ENCODE measurements at regions of chr1 and their contacts with region 1.

Region 1: GRCh38 chr1:154943649-154944400 is 7.3 kb upstream of the PMVK start:
- DNase-seq: peak; percentile 61
- H3K4me3 Mint-ChIP-seq: peak overlapping the region; percentile 52
- H3K27ac Mint-ChIP-seq: peak overlapping the region; percentile 93
- H3K4me1 Mint-ChIP-seq: peaks cover 54% of the 10 kb centered on the region
- H3K27me3 Mint-ChIP-seq: no peaks in the 10 kb centered on the region

Region 2: GRCh38 chr1:154961497-154962262 is 17.9 kb after region 1 on chr1 and contains the start of gene PYGO2:
- CTCF ChIA-PET with region 1: interaction called, 14 read pairs
- POLR2A ChIA-PET with region 1: interaction called, 3 read pairs
- intact Hi-C with region 1: no loop called
- DNase-seq: peak; percentile 88
- H3K4me3 Mint-ChIP-seq: peak within 1 kb of the TSS; percentile 96
- H3K27ac Mint-ChIP-seq: peak within 1 kb of the TSS; percentile 92
- H3K4me1 Mint-ChIP-seq: peaks cover 36% of the 10 kb centered on the region
- H3K27me3 Mint-ChIP-seq: no peaks in the 10 kb centered on the region
- total RNA-seq, gene PYGO2: 31.5 to 32.4 TPM

Region 3: DNA sequence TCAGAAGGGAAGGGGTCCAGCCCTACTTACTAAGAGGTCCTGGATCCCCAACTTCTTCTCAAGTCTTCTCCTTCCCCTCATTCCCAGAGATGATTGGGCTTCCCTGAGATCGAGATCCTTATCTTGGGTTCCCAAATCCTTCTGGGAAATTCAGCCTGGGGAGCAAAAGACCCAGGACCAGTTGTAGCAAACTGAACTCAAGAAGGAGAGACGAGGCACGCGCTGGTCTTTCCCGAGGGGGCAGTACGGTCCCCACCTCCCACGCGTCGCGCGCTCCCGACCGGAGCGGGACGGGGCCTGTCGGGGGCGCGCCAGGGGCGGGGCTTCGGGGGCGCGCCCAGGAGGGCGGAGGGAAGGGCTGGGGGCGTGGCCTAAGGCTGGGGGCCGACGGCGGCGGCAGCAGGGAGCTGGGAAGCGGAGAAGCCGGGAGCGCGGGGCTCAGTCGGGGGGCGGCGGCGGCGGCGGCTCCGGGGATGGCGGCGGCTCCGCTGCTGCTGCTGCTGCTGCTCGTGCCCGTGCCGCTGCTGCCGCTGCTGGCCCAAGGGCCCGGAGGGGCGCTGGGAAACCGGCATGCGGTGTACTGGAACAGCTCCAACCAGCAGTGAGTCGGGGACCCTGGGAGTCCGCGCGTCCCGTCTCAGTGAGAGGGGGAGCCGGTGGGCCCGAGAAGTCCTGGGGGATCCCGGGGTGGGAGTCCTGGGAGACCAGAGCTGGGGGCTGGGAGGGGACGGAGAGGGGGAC is 134.8 kb after region 1 on chr1 and contains the start of gene EFNA3:
- CTCF ChIA-PET with region 1: no interaction called
- POLR2A ChIA-PET with region 1: no interaction called
- intact Hi-C with region 1: no loop called
- DNase-seq: peak; percentile 77
- H3K4me3 Mint-ChIP-seq: peak within 1 kb of the TSS; percentile 56
- H3K27ac Mint-ChIP-seq: no peak within 1 kb of the TSS
- H3K4me1 Mint-ChIP-seq: peaks cover 33% of the 10 kb centered on the region
- H3K27me3 Mint-ChIP-seq: peaks cover 32% of the 10 kb centered on the region
- total RNA-seq, gene EFNA3: 2.4 to 2.6 TPM

Measured in activated CD4-positive, alpha-beta memory T cell treated with anti-CD3 and anti-CD28 coated beads for 36 hours (primary cell).